ENCODE measurements at regions of chr2 and their contacts with region 1.

Region 1: GRCh38 chr2:227460070-227460485 is 11.9 kb upstream of the AGFG1 start:
- DNase-seq: peak; percentile 29
- H3K4me3 Mint-ChIP-seq: peak overlapping the region; percentile 59
- H3K27ac Mint-ChIP-seq: peak overlapping the region; percentile 84
- H3K4me1 Mint-ChIP-seq: peaks cover 74% of the 10 kb centered on the region
- H3K27me3 Mint-ChIP-seq: no peaks in the 10 kb centered on the region

Region 2: DNA sequence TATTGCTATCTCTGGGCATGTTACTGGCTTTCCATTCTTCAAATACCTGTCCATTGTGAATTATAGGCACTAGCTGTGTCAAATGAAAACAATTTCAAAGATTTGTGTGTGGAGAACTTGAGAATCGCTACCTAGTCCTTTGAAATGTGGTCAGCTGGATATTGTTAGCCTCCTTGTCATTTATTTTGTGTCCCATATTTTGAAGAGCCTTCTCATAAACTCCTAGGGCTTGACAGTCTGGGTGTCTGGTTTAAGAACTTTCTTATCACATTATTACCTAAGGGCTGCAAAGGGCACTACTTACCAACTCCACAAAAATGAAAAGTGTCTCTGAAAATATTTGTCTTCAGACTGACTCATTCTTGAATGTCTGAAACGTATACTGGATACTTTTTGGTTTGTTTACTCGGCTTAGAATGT is 245.4 kb before region 1 on chr2:
- intact Hi-C with region 1: no loop called
- DNase-seq: no peak
- H3K4me3 Mint-ChIP-seq: no peak overlapping the region
- H3K27ac Mint-ChIP-seq: no peak overlapping the region
- H3K4me1 Mint-ChIP-seq: no peaks in the 10 kb centered on the region
- H3K27me3 Mint-ChIP-seq: peaks cover 1% of the 10 kb centered on the region

Region 3: DNA sequence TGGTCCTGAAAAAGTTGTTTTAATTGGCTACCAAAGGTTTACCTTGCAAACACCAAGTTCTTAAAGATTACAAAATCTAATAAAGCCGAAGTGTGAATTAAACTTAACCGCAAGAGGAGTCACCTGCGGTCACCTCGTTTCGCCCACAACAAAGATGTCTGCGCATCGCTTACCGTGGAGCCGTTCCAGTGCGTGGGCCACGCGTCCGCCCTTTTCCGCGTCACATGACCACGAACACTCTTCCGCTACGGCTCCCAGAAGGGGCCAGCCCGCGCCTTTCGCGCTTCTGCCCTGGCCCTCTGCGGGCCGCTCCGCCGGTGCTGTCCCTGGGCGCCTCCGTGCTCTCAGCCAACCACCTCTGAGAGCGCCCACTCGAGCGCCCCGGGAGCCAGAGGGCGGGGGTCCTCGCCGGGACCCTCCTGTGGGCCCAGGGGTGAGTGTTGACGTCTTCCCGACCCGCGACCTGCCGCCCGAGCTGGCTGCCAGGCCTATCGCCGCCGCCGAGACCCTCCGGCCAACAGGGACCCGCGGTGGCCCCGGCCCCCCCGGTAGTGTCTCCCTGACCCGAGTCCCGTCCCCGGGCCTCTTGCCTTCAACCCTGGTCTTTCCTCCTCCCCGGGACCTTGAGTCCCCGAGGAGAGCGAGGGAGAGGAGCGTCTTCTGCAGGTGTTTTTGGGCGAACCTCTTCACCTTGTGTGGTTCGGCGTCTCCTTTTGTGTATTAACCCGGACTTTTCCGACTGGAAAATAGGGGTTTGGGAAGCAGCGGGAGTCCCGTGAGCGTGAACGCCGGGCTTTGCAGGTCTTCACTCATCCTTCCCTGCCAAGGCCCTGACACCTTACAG is 134.9 kb before region 1 on chr2 and contains the start of gene MFF:
- intact Hi-C with region 1: loop called (anchors 1 kb)
- DNase-seq: peak; percentile 91
- H3K4me3 Mint-ChIP-seq: peak within 1 kb of the TSS; percentile 94
- H3K27ac Mint-ChIP-seq: peak within 1 kb of the TSS; percentile 94
- H3K4me1 Mint-ChIP-seq: peaks cover 42% of the 10 kb centered on the region
- H3K27me3 Mint-ChIP-seq: peaks cover 14% of the 10 kb centered on the region
- total RNA-seq, gene MFF: 69.9 and 74.9 TPM in 2 replicates

Region 4: DNA sequence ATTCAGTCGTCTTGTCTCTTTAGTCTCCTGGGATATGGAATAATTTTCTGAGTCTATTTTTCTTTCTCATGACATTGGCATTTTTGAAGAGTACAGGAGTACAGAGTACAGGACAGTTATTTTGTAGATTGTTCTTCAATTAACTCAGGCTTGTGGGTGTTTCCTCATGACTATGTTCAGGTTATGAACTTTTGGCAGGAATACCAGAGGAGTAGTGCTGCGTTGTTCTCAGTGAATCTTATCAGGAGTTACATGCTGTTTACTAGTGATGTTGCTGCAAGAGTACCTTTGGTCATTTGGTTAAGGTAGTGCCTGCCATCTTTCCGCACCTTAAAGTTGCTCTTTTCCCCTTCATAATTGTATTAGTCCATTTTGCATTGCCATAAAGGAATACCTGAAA is 29.4 kb before region 1 on chr2:
- intact Hi-C with region 1: loop called (anchors 2 kb)
- DNase-seq: no peak
- H3K4me3 Mint-ChIP-seq: no peak overlapping the region
- H3K27ac Mint-ChIP-seq: no peak overlapping the region
- H3K4me1 Mint-ChIP-seq: peaks cover 7% of the 10 kb centered on the region
- H3K27me3 Mint-ChIP-seq: no peaks in the 10 kb centered on the region

Region 5: GRCh38 chr2:227488045-227488444 is 28.0 kb after region 1 on chr2:
- intact Hi-C with region 1: loop called (anchors 1 kb)
- DNase-seq: no peak
- H3K4me3 Mint-ChIP-seq: peak overlapping the region; percentile 15
- H3K27ac Mint-ChIP-seq: peak overlapping the region; percentile 64
- H3K4me1 Mint-ChIP-seq: peaks cover 28% of the 10 kb centered on the region
- H3K27me3 Mint-ChIP-seq: no peaks in the 10 kb centered on the region